ENCODE measurements at regions of chr4 and their contacts with region 1.

Region 1: DNA sequence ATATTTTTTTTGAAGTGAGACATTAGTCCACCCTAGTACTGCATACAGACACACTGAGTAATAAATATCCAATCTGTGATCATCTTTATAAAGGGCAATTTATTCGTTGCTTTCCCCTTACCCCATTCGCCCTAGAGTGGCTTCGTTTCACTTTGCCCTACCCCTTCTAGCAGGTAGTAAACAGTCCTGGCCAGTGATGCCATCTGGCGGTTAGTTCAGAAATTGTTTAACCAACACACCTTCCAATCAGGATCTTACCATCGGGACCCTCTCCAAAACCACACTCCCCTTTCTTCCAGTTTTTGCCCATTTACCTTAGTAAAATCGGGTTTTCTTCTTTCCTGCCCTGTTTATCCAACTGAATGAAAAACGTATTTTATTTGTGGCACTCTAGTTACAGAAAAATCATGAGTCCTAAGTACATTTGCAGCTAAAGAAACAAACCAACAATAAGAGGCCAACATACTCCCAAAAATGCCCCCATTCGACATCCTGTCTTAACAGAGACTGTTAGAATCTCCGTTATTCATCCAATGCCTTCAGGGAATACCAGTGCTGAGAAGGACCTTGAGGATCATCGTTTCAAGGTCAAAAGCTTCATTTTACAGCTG is 2.2 kb downstream of the PPA2 start:
- DNase-seq: peak; percentile 64
- H3K4me3 ChIP-seq: peak overlapping the region; percentile 34 to 89 (median 84)
- H3K27ac ChIP-seq: peak overlapping the region; percentile 83
- H3K4me1 ChIP-seq: peaks cover 7% of the 10 kb centered on the region
- H3K27me3 ChIP-seq: no peaks in the 10 kb centered on the region
- CTCF ChIP-seq: peak; percentile 59 to 75

Region 2: DNA sequence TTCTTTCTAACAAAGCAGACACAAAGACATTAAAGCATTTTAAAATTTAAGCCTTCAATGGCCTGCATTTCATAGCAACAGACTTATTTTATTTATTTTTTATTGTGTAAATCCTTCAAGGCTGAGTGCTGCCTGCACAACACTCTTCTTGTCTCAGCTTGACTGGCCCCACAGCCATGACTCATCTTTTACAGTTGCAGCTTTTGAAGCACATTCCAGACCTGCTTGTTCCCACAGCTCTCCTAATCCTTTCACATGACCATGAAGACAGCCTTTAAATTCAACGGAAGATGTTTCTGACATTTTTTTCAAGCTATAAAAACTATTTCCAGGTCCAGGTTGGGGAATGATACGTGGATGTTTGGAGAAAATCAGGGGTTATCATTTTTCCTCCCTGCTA is 1475.0 kb before region 1 on chr4:
- CTCF ChIA-PET with region 1: interaction called, 4 read pairs
- dilution Hi-C with region 1: no loop called
- in situ Hi-C with region 1: loop called in 1 of 2 experiments (anchors 25 kb)
- intact Hi-C with region 1: loop called (anchors 1 kb)
- DNase-seq: peak; percentile 94
- H3K4me3 ChIP-seq: peak overlapping the region; percentile 19 to 54 (median 24)
- H3K27ac ChIP-seq: peak overlapping the region; percentile 86
- H3K4me1 ChIP-seq: no peaks in the 10 kb centered on the region
- H3K27me3 ChIP-seq: no peaks in the 10 kb centered on the region
- CTCF ChIP-seq: no peak

Region 3: DNA sequence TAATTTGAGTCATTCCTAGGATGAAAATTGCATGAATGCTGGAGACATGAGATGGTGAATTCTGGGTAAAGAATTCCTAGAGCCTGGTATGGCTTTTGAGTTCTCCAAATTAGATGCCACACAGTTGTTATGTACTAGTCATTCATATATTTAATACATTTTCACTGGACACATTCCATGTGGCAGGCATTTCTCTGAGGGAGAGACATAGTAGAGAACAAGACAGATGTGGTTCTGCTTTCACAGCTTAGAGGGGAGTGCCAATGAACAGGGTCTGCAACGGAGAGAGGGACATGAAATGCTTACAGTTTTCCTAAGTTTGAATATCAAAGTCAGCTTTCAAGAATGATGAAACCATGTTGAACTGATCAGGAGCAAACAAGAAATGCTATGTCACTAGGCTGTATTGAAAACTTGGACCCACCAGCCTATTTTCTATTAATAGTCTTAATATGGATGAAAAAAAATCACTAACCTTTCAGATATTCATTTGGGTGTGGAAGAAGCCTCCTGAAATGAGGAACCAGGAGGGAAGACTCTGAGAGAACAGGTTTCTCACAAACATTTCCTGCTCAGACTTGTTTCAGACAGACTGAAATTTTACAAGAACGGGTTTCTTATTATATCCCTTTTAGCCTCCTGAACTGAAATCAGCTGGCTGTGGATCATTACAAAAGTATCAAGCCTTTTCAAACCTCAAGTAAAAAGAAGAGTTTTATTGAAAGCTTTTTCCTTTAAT is 601.0 kb before region 1 on chr4:
- CTCF ChIA-PET with region 1: no interaction called
- dilution Hi-C with region 1: no loop called
- in situ Hi-C with region 1: no loop called
- intact Hi-C with region 1: loop called (anchors 5 kb)
- DNase-seq: peak; percentile 58
- H3K4me3 ChIP-seq: no peak overlapping the region
- H3K27ac ChIP-seq: no peak overlapping the region
- H3K4me1 ChIP-seq: peaks cover 10% of the 10 kb centered on the region
- H3K27me3 ChIP-seq: no peaks in the 10 kb centered on the region
- CTCF ChIP-seq: no peak

Region 4: DNA sequence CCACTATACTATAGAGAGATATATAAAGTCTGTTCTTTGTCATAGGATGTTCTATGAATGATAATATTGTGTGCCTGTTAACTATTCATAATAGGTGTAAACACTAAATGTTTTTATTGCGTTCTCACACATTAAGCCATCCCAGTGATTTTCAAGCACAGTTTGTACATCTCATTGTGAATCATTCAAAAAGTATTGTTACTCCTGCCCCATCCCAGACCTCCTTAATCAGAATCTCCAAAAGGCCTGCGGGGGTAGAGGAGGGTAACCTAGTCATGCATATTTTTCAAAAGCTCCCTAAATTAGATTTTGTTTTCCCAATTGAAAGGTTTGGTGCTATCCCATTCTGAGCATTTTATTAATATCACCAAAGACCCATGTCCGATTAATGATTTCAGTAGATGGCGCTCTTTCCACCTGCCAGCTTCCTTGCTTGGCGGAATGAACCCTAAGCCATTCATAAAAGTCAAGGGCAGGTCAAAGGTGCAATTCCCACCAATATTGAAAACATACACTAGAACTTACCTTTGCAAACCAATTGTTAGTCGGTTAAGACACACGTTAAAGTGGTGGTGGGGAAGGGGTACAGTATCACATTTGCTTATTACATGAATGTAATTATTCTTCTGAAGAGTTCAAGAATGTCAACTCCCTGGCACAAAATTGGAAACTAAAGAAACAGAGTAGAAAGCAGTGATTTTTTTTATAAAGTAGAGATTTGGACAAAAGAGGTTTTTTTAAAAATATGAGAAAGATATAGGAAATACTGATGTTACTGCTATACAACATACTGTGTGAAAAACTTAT is 330.8 kb before region 1 on chr4:
- CTCF ChIA-PET with region 1: no interaction called
- dilution Hi-C with region 1: no loop called
- in situ Hi-C with region 1: loop called (anchors 10 to 25 kb)
- intact Hi-C with region 1: loop called (anchors 1 kb)
- DNase-seq: no peak
- H3K4me3 ChIP-seq: no peak overlapping the region
- H3K27ac ChIP-seq: no peak overlapping the region
- H3K4me1 ChIP-seq: peaks cover 13% of the 10 kb centered on the region
- H3K27me3 ChIP-seq: no peaks in the 10 kb centered on the region
- CTCF ChIP-seq: peak; percentile 43 to 60

Region 5: GRCh38 chr4:105208561-105208960 is 263.1 kb before region 1 on chr4:
- CTCF ChIA-PET with region 1: no interaction called
- dilution Hi-C with region 1: no loop called
- in situ Hi-C with region 1: no loop called
- intact Hi-C with region 1: loop called (anchors 5 kb)
- DNase-seq: no peak
- H3K4me3 ChIP-seq: no peak overlapping the region
- H3K27ac ChIP-seq: no peak overlapping the region
- H3K4me1 ChIP-seq: no peaks in the 10 kb centered on the region
- H3K27me3 ChIP-seq: no peaks in the 10 kb centered on the region
- CTCF ChIP-seq: no peak

Measured in mammary epithelial cell (primary cell).